CD4-positive, alpha-beta T cell (primary cell): ENCODE measurements at regions of chr9 and their contacts with region 1.

Region 1: GRCh38 chr9:104991144-104991953 is 63.4 kb upstream of the ABCA1 start:
- DNase-seq: peak; percentile 64 to 93 (median 80)
- ATAC-seq: peak; percentile 78
- H3K4me3 ChIP-seq: peak overlapping the region; percentile 72
- H3K4me3 Mint-ChIP-seq: peak overlapping the region; percentile 98
- H3K27ac ChIP-seq: peak overlapping the region; percentile 93
- H3K27ac Mint-ChIP-seq: peak overlapping the region; percentile 100
- H3K4me1 ChIP-seq: peaks cover 38% of the 10 kb centered on the region
- H3K4me1 Mint-ChIP-seq: peaks cover 41% of the 10 kb centered on the region
- H3K27me3 ChIP-seq: no peaks in the 10 kb centered on the region
- H3K27me3 Mint-ChIP-seq: peaks cover 19% of the 10 kb centered on the region
- CTCF ChIP-seq: no peak

Region 2: DNA sequence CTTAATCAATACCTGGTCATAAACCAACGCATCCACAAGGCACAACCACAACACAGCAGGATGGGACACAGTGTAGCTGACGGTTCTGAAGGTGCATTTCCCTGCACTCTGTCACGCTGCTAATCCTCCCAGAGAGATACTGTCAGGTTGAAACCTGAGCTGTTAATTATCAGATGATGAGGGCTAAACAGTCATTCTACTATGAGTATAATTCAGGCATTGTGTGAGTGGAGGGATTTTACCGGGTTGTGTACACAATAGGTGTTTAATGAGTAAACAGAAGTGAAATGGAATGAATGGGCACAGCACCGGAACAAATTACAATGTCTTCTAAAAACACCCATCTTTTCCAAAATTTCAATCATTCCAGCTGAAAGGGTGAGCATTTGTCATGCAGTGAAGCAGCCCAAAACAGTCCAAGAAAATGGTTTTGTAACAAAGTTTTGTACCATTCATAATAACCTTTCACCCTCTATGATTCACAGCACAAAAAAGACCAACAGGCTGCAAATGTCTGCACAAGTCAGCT is 134.9 kb before region 1 on chr9:
- CTCF ChIA-PET with region 1: no interaction called
- POLR2A ChIA-PET with region 1: no interaction called
- intact Hi-C with region 1: no loop called
- DNase-seq: no peak
- ATAC-seq: no peak
- H3K4me3 ChIP-seq: no peak overlapping the region
- H3K4me3 Mint-ChIP-seq: no peak overlapping the region
- H3K27ac ChIP-seq: no peak overlapping the region
- H3K27ac Mint-ChIP-seq: no peak overlapping the region
- H3K4me1 ChIP-seq: no peaks in the 10 kb centered on the region
- H3K4me1 Mint-ChIP-seq: no peaks in the 10 kb centered on the region
- H3K27me3 ChIP-seq: no peaks in the 10 kb centered on the region
- H3K27me3 Mint-ChIP-seq: no peaks in the 10 kb centered on the region
- CTCF ChIP-seq: no peak

Region 3: DNA sequence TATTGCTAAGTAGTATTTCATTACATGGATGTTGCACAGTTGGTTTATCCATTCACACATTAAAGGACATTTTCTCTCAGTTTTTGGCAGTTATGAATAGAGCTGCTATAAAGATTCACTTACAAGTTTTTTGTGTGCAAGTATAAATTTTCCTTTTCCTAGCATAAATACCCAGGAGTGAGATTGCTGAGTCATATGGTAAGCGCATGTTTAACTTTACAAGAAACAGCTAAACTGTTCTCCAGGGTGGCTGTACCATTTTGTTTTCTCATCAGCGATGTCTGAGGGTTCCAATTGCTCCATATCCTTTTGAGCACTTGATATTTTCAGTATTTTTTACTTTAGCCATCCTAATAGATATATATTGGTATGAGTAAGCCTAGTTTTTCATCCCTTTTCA is 47.0 kb before region 1 on chr9:
- CTCF ChIA-PET with region 1: no interaction called
- POLR2A ChIA-PET with region 1: no interaction called
- intact Hi-C with region 1: no loop called
- DNase-seq: no peak
- ATAC-seq: no peak
- H3K4me3 ChIP-seq: no peak overlapping the region
- H3K4me3 Mint-ChIP-seq: no peak overlapping the region
- H3K27ac ChIP-seq: no peak overlapping the region
- H3K27ac Mint-ChIP-seq: no peak overlapping the region
- H3K4me1 ChIP-seq: no peaks in the 10 kb centered on the region
- H3K4me1 Mint-ChIP-seq: no peaks in the 10 kb centered on the region
- H3K27me3 ChIP-seq: no peaks in the 10 kb centered on the region
- H3K27me3 Mint-ChIP-seq: no peaks in the 10 kb centered on the region
- CTCF ChIP-seq: no peak

Region 4: GRCh38 chr9:104961238-104961637 is 30.1 kb before region 1 on chr9:
- CTCF ChIA-PET with region 1: interaction called, 3 read pairs
- POLR2A ChIA-PET with region 1: no interaction called
- intact Hi-C with region 1: loop called in 1 of 2 experiments (anchors 1 kb)
- DNase-seq: peak in 12 of 14 experiments; percentile 9 to 79 (median 42)
- ATAC-seq: peak; percentile 99
- H3K4me3 ChIP-seq: no peak overlapping the region
- H3K4me3 Mint-ChIP-seq: peak overlapping the region; percentile 6
- H3K27ac ChIP-seq: no peak overlapping the region
- H3K27ac Mint-ChIP-seq: peak overlapping the region; percentile 10
- H3K4me1 ChIP-seq: peaks cover 14% of the 10 kb centered on the region
- H3K4me1 Mint-ChIP-seq: peaks cover 32% of the 10 kb centered on the region
- H3K27me3 ChIP-seq: no peaks in the 10 kb centered on the region
- H3K27me3 Mint-ChIP-seq: no peaks in the 10 kb centered on the region
- CTCF ChIP-seq: no peak

Region 5: DNA sequence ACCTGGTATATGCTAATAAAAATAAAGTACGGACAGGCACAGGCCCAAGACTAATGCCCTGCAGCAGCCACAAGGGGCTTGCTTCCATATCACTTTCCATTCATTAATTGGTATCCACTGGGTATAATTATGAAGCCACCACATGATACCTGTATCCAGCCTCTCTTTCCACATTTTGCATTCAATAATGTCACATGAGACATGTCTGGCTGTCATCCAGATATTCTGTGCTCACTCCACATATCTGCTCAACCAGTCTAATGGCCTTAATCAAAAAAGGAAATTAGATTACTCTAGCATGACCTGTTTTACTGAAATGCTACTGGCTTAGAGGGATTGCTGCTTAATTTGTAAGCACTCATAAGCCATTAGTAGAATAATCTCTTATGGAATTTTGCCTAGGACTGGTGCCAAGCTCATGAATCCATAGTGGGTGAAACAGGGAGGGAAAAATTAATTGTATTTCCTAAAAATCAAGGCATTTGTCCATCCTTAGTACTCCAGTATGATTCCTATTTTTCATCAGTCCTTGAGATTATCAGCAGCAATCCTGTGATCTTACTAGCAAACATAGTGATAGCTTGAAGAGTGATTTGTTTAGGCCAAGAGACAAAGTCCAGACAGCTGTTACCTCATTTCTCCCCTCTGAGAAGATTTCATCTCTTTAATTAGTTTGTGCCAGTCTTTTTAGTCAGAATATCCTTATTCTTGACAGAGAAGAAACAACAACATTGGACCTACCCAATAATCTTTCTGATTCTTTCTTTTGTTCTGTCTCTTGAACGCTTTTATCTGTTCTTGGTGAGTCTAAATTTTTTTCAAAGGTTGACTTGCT is 55.8 kb after region 1 on chr9:
- CTCF ChIA-PET with region 1: no interaction called
- POLR2A ChIA-PET with region 1: no interaction called
- intact Hi-C with region 1: loop called in 1 of 2 experiments (anchors 10 kb)
- DNase-seq: no peak
- ATAC-seq: no peak
- H3K4me3 ChIP-seq: no peak overlapping the region
- H3K4me3 Mint-ChIP-seq: no peak overlapping the region
- H3K27ac ChIP-seq: no peak overlapping the region
- H3K27ac Mint-ChIP-seq: no peak overlapping the region
- H3K4me1 ChIP-seq: peaks cover 10% of the 10 kb centered on the region
- H3K4me1 Mint-ChIP-seq: peaks cover 20% of the 10 kb centered on the region
- H3K27me3 ChIP-seq: no peaks in the 10 kb centered on the region
- H3K27me3 Mint-ChIP-seq: no peaks in the 10 kb centered on the region
- CTCF ChIP-seq: no peak

Region 6: DNA sequence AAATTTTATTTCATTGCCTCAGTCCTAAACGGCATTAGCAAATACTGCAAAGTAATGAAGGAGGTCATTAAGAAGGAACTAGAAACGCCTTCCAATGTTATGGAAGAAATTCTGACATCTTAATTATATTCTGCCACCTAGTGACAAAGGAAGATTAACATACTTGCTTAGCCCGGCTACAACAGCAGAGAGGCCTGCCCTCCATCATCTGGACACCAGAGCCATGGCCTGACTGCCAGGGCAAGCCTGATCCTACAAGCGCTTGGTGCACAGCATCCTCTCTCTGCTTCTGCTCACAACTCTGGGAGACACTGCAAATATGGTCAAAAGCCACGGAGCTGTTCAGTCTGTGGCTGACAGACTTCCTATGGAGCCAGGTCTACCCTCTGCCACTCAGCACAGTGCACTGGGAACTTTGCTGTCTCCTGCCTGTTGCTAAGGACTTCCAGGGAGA is 165.8 kb after region 1 on chr9:
- CTCF ChIA-PET with region 1: no interaction called
- POLR2A ChIA-PET with region 1: no interaction called
- intact Hi-C with region 1: loop called in 1 of 2 experiments (anchors 1 kb)
- DNase-seq: peak in 8 of 14 experiments; percentile 1 to 68 (median 30)
- ATAC-seq: peak; percentile 80
- H3K4me3 ChIP-seq: no peak overlapping the region
- H3K4me3 Mint-ChIP-seq: no peak overlapping the region
- H3K27ac ChIP-seq: no peak overlapping the region
- H3K27ac Mint-ChIP-seq: no peak overlapping the region
- H3K4me1 ChIP-seq: peaks cover 12% of the 10 kb centered on the region
- H3K4me1 Mint-ChIP-seq: peaks cover 34% of the 10 kb centered on the region
- H3K27me3 ChIP-seq: no peaks in the 10 kb centered on the region
- H3K27me3 Mint-ChIP-seq: no peaks in the 10 kb centered on the region
- CTCF ChIP-seq: peak; percentile 72

Region 7: DNA sequence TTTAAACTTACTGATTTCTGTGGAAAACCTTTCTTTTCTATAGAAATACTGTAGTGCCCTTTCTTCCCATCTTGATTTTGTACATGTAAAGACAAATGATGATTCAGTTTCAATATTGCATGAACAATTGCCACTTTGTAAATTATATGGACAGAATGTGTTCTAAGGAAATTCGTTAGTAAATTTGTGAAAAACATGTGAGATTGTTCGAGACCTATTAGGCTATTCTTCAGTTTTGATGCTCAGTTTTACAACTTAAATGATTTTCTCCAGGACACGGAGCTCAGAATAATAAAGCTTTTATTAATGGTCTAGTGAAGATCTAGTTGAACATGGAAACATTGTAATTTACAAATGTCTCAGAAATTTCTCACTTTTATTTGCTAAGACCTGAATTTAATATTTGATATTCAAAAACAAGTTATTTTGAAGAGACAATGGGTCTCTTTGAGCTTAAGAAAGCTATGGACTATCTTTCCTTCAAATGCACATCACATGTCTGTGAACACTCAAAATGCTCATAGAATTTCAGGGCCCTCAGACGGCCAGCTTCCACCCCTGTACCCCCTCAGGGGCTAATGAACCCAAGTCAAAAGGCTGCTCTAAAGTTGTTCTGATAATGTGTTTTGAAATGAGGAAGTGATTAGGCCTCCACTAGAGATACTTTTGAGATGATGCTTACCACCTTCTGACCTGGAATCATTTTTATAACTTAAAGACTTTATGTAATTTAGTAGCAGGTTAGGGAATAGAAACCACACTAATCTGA is 402.4 kb after region 1 on chr9:
- CTCF ChIA-PET with region 1: no interaction called
- POLR2A ChIA-PET with region 1: no interaction called
- intact Hi-C with region 1: no loop called
- DNase-seq: no peak
- ATAC-seq: no peak
- H3K4me3 ChIP-seq: no peak overlapping the region
- H3K4me3 Mint-ChIP-seq: no peak overlapping the region
- H3K27ac ChIP-seq: no peak overlapping the region
- H3K27ac Mint-ChIP-seq: no peak overlapping the region
- H3K4me1 ChIP-seq: no peaks in the 10 kb centered on the region
- H3K4me1 Mint-ChIP-seq: no peaks in the 10 kb centered on the region
- H3K27me3 ChIP-seq: peaks cover under 1 to 2% of the 10 kb centered on the region in 2 experiments
- H3K27me3 Mint-ChIP-seq: peaks cover 40% of the 10 kb centered on the region
- CTCF ChIP-seq: no peak

Region 8: DNA sequence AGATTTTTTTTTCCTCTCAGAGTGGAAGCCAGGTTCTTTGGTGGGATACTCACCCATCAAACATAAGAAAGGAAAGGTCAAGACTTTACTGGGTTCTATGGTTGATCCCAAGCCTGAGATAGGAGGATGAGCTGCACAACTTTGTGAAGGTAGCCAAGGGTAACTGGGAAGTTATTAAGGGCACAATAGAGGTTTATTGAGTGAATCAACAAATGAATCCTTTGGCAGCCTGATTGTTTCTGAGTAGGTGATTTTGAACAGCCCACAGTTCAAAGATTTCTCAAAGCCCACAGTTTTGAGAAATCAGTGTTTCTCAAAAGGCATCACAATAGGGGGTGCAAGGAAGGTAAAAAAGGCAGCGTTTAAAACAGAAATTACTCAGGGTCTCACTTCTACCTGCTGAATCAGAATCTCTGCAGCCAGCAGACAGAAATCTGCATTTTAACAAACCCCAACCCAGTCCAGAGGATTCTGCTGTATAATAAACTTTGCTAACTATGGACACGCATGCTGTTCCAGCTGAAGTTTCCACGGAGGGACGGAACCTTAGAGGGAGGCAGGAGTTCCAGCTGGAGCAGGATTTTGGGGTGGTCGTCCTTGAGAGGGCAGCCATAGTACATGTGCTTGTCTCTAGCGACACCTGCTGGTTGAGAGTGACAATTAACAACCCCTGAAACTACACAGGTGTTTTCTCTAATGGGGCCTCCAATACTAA is 423.8 kb after region 1 on chr9:
- CTCF ChIA-PET with region 1: no interaction called
- POLR2A ChIA-PET with region 1: no interaction called
- intact Hi-C with region 1: loop called in 1 of 2 experiments (anchors 5 kb)
- DNase-seq: peak; percentile 19 to 84 (median 48)
- ATAC-seq: peak; percentile 86
- H3K4me3 ChIP-seq: no peak overlapping the region
- H3K4me3 Mint-ChIP-seq: no peak overlapping the region
- H3K27ac ChIP-seq: no peak overlapping the region
- H3K27ac Mint-ChIP-seq: no peak overlapping the region
- H3K4me1 ChIP-seq: peaks cover 3% of the 10 kb centered on the region
- H3K4me1 Mint-ChIP-seq: peaks cover 4% of the 10 kb centered on the region
- H3K27me3 ChIP-seq: peaks cover 9 to 19% of the 10 kb centered on the region in 2 experiments
- H3K27me3 Mint-ChIP-seq: peaks cover 51% of the 10 kb centered on the region
- CTCF ChIP-seq: peak; percentile 94